Colonic mucosa (tissue), 4 donors: ENCODE measurements at regions of chr7 and their contacts with region 1.

Region 1: GRCh38 chr7:74417419-74417971 is 36.2 kb upstream of the GTF2IRD1 start:
- DNase-seq: peak; percentile 70
- H3K4me3 ChIP-seq: no peak overlapping the region
- H3K27ac ChIP-seq: no peak overlapping the region
- H3K4me1 ChIP-seq: no peaks in the 10 kb centered on the region
- H3K27me3 ChIP-seq: no peaks in the 10 kb centered on the region
- CTCF ChIP-seq: peak; percentile 96

Region 2: GRCh38 chr7:74544706-74545469 is 127.4 kb after region 1 on chr7:
- intact Hi-C with region 1: loop called (anchors 10 kb)
- DNase-seq: peak; percentile 76
- H3K4me3 ChIP-seq: no peak overlapping the region
- H3K27ac ChIP-seq: peak overlapping the region; percentile 67
- H3K4me1 ChIP-seq: no peaks in the 10 kb centered on the region
- H3K27me3 ChIP-seq: no peaks in the 10 kb centered on the region
- CTCF ChIP-seq: peak; percentile 60

Region 3: GRCh38 chr7:74709880-74710671 is 292.6 kb after region 1 on chr7:
- intact Hi-C with region 1: loop called (anchors 5 kb)
- DNase-seq: no peak
- H3K4me3 ChIP-seq: no peak overlapping the region
- H3K27ac ChIP-seq: no peak overlapping the region
- H3K4me1 ChIP-seq: no peaks in the 10 kb centered on the region
- H3K27me3 ChIP-seq: no peaks in the 10 kb centered on the region
- CTCF ChIP-seq: no peak